GM23248 (cell line): ENCODE measurements at regions of chr5 and their contacts with region 1.

Region 1: GRCh38 chr5:54249210-54250028 is 61.0 kb downstream of the ARL15 start:
- DNase-seq: peak; percentile 11
- H3K4me3 ChIP-seq: no peak overlapping the region
- H3K27ac ChIP-seq: no peak overlapping the region
- H3K4me1 ChIP-seq: no peaks in the 10 kb centered on the region
- H3K27me3 ChIP-seq: no peaks in the 10 kb centered on the region

Region 2: GRCh38 chr5:54415896-54416601 is 166.6 kb after region 1 on chr5:
- in situ Hi-C with region 1: loop called (anchors 10 kb)
- DNase-seq: peak; percentile 50
- H3K4me3 ChIP-seq: no peak overlapping the region
- H3K27ac ChIP-seq: no peak overlapping the region
- H3K4me1 ChIP-seq: peaks cover 14% of the 10 kb centered on the region
- H3K27me3 ChIP-seq: no peaks in the 10 kb centered on the region

Region 3: GRCh38 chr5:54492178-54492577 is 242.8 kb after region 1 on chr5:
- in situ Hi-C with region 1: loop called (anchors 10 kb)
- DNase-seq: peak; percentile 9
- H3K4me3 ChIP-seq: no peak overlapping the region
- H3K27ac ChIP-seq: no peak overlapping the region
- H3K4me1 ChIP-seq: peaks cover 14% of the 10 kb centered on the region
- H3K27me3 ChIP-seq: no peaks in the 10 kb centered on the region

Region 4: DNA sequence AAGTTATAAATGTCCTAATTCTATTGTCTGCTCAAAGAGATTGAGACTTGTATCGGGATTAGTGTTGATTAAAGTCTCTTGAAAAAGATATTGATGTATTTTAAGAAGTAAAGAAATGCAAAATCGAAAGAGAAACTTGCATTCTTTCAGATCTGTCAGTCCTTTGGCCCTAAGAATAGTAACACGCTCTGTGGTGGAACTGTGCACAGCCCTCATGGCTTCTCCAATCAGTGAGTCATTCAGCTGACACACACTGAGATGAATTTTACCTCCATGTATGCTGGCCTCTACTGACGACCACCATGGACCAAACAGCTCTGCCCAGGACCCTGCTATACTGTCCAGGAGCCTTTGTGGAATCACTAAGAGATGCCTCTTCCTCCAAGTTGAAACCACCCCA is 503.6 kb after region 1 on chr5:
- in situ Hi-C with region 1: no loop called
- DNase-seq: peak; percentile 82
- H3K4me3 ChIP-seq: peak overlapping the region; percentile 37
- H3K27ac ChIP-seq: no peak overlapping the region
- H3K4me1 ChIP-seq: peaks cover 23% of the 10 kb centered on the region
- H3K27me3 ChIP-seq: no peaks in the 10 kb centered on the region

Region 5: GRCh38 chr5:54867310-54867944 is 618.0 kb after region 1 on chr5:
- in situ Hi-C with region 1: loop called (anchors 25 kb)
- DNase-seq: peak; percentile 81
- H3K4me3 ChIP-seq: peak overlapping the region; percentile 46
- H3K27ac ChIP-seq: no peak overlapping the region
- H3K4me1 ChIP-seq: no peaks in the 10 kb centered on the region
- H3K27me3 ChIP-seq: no peaks in the 10 kb centered on the region